Cardiac septum (tissue), 1 donor: ENCODE measurements at regions of chr12 and their contacts with region 1.

Region 1: DNA sequence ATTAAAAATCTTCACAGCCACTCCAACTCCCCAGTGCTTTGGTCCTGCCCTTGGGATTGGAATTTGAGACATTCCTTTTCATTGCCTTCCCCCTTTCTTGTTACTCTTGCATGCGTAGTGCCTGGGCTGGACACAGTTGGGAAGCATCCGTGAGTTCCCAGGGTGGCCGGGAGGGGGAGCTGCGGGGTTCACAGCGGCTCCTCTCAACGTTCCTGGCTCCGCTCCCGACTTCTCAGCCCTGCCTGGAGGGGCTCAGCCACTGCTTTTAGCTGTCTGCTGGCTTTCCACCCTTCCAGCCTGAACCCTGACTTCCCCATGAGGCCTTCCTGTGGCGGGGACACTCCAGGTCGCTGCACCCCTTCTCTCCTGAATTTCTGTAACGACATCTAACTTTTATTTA is 3.2 kb downstream of the TEX52 start:
- DNase-seq: peak; percentile 91

Region 2: GRCh38 chr12:2794736-2795289 is 58.8 kb before region 1 on chr12 and contains the start of gene FKBP4:
- intact Hi-C with region 1: no loop called
- DNase-seq: peak; percentile 96
- total RNA-seq, gene FKBP4: 36.5 TPM

Region 3: GRCh38 chr12:3041558-3042164 is 188.0 kb after region 1 on chr12:
- intact Hi-C with region 1: loop called (anchors 2 kb)
- DNase-seq: no peak

Region 4: GRCh38 chr12:3445119-3445978 is 591.7 kb after region 1 on chr12:
- intact Hi-C with region 1: no loop called
- DNase-seq: no peak